IMR-90 (cell line): ENCODE measurements at regions of chr19 and their contacts with region 1.

Region 1: GRCh38 chr19:47973529-47973928 is 18.4 kb downstream of the BSPH1 start:
- DNase-seq: no peak
- ATAC-seq: no peak
- H3K4me3 ChIP-seq: no peak overlapping the region
- H3K27ac ChIP-seq: no peak overlapping the region
- H3K4me1 ChIP-seq: no peaks in the 10 kb centered on the region
- H3K27me3 ChIP-seq: no peaks in the 10 kb centered on the region; the same call in 1 of the 2 replicates
- CTCF ChIP-seq: no peak
- POLR2A ChIP-seq: no peak
- RAD21 ChIP-seq: no peak

Region 2: DNA sequence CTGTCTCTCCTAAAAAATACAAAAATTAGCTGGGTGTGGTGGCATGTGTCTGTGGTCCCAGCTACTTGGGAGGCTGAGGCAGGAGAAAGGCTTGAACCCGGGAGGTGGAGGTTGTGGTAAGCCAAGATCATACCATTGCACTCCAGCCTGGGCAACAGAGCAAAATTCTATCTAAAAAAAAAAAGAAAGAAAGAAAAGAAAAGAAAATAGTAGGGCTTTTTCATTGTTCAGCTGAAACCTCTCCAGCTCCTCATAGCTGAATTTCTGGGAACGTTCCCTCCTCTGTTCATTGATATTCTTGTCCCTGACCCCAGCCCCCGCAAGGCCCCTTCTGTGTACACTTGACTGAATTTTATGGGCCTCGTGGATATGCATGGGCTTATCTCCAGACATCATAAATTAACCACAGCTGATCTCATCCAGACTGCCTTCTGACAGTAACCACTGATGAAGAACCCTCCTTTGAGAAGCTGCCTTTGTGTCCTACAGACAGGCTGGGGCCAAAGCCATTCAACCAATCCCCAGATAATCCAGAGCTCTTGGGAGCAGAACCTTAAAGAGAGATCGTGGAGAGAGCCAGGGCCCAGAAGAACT is 20.8 kb after region 1 on chr19 and contains the start of gene ELSPBP1:
- CTCF ChIA-PET with region 1: no interaction called
- POLR2A ChIA-PET with region 1: no interaction called
- dilution Hi-C with region 1: no loop called
- in situ Hi-C with region 1: no loop called
- intact Hi-C with region 1: no loop called
- DNase-seq: no peak
- ATAC-seq: no peak
- H3K4me3 ChIP-seq: no peak within 1 kb of the TSS
- H3K27ac ChIP-seq: no peak within 1 kb of the TSS
- H3K4me1 ChIP-seq: no peaks in the 10 kb centered on the region
- H3K27me3 ChIP-seq: peaks cover 3% of the 10 kb centered on the region; the same call in 1 of the 2 replicates
- CTCF ChIP-seq: no peak
- POLR2A ChIP-seq: no peak
- RAD21 ChIP-seq: no peak
- total RNA-seq, gene ELSPBP1: not detected in 2 replicates

Region 3: GRCh38 chr19:48110350-48110966 is 136.9 kb after region 1 on chr19 and contains the start of gene PLA2G4C:
- CTCF ChIA-PET with region 1: no interaction called
- POLR2A ChIA-PET with region 1: no interaction called
- dilution Hi-C with region 1: no loop called
- in situ Hi-C with region 1: no loop called
- intact Hi-C with region 1: no loop called
- DNase-seq: peak; percentile 95
- ATAC-seq: peak; percentile 86
- H3K4me3 ChIP-seq: peak within 1 kb of the TSS; percentile 57
- H3K27ac ChIP-seq: peak within 1 kb of the TSS; percentile 91
- H3K4me1 ChIP-seq: no peaks in the 10 kb centered on the region; the same call in 1 of the 2 replicates
- H3K27me3 ChIP-seq: no peaks in the 10 kb centered on the region
- CTCF ChIP-seq: no peak
- POLR2A ChIP-seq: peak; percentile 78; the same call in 1 of the 2 replicates
- RAD21 ChIP-seq: no peak
- total RNA-seq, gene PLA2G4C: 4.3 and 5.0 TPM in 2 replicates

Region 4: GRCh38 chr19:48152551-48152950 is 179.0 kb after region 1 on chr19:
- CTCF ChIA-PET with region 1: interaction called, 3 read pairs
- POLR2A ChIA-PET with region 1: no interaction called
- dilution Hi-C with region 1: no loop called
- in situ Hi-C with region 1: loop called (anchors 10 kb)
- intact Hi-C with region 1: no loop called
- DNase-seq: peak; percentile 75
- ATAC-seq: peak; percentile 95
- H3K4me3 ChIP-seq: no peak overlapping the region
- H3K27ac ChIP-seq: no peak overlapping the region
- H3K4me1 ChIP-seq: no peaks in the 10 kb centered on the region
- H3K27me3 ChIP-seq: no peaks in the 10 kb centered on the region
- CTCF ChIP-seq: peak; percentile 82
- POLR2A ChIP-seq: no peak
- RAD21 ChIP-seq: peak; percentile 79